T-cell (primary cell): ENCODE measurements at regions of chr6 and their contacts with region 1.

Region 1: DNA sequence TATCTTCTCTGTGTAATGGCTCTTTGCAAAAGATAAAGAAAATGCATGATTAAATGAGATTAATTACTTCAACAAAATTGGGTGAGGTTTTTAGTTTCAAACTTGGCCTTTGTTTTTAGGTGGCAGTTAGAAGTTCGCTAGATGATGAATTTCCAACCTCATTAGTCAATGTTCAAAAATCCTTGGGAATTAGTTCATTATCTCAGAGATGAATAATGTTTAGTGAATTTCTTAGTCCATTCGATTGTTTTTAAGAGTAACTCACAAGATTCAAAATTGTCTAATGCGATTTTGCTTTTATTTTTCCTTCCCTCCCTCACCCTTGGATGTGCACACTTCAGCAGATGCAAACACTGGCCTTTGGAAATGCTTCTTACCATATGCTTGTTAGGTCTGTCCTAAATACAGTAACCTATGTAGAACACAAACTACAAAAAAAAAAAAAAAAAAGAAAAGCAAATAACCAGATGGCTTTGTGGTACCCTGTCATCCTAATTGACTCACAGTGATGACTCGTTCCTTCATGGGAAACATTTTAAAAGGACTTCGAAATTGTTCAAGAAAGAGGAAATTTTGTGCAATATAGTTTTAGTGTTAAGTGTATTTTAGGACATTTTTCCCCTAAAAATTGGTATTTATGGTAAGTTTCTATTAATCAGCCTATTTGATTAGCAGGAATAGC is 66.7 kb downstream of the FAM229B start:
- DNase-seq: no peak
- ATAC-seq: no peak
- H3K4me3 ChIP-seq: no peak overlapping the region
- H3K4me3 Mint-ChIP-seq: no peak overlapping the region
- H3K27ac ChIP-seq: no peak overlapping the region
- H3K27ac Mint-ChIP-seq: no peak overlapping the region
- H3K4me1 ChIP-seq: no peaks in the 10 kb centered on the region
- H3K4me1 Mint-ChIP-seq: peaks cover 0 to 9% (median 0%) of the 10 kb centered on the region in 3 donors
- H3K27me3 ChIP-seq: no peaks in the 10 kb centered on the region
- H3K27me3 Mint-ChIP-seq: peaks cover 5 to 16% of the 10 kb centered on the region in 2 donors

Region 2: DNA sequence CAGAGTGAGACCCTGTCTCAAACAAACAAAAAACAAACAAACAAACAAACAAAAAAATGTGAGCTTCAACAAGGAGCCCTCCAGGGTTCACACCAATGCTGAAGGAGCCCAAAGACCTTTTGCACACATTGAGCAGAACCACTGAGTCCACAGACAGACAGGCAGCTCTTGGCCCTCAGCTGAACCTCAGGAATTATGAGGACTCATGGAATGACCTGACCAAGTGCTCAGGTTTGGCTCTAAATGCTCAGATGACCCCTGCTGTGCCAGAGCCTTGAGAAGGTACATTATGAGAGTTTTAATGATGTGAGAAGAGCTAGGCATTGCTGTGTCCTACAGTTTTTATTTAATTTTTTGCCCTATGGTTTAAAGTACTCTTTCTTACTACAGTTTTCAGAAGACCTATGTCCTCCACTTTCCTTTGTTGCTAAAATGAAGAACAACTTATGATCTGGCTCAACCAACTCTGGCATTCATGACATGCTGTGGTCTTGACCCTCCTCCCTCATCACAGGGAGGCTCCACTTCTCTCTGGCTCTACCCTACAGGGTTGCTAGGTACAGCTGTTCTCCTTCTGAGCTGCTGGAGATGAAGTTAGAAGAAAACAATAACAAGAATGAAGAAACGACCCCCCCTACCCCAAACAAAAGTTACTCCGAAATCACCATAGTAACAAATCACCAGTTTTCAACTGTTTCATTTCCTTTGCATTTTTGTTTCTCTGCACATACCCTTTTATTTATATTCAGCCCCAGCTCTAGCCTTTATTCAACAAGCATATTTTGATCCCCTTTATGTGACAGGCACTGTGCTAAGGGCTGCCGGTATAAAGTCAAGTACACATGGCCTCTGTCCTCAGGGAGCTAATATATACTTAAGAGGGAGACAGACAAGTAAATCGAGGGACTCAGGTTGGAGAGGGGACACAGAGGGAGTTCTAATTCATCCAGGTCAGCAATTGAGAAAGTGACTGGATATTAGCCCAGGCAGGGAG is 419.7 kb before region 1 on chr6:
- CTCF ChIA-PET with region 1: no interaction called
- POLR2A ChIA-PET with region 1: interaction called in 1 of 2 experiments, 11 read pairs
- DNase-seq: peak in 2 of 35 experiments; percentile 34 to 49
- ATAC-seq: peak in 1 of 4 experiments; percentile 68
- H3K4me3 ChIP-seq: no peak overlapping the region
- H3K4me3 Mint-ChIP-seq: peak overlapping the region in 1 of 3 donors; percentile 29
- H3K27ac ChIP-seq: peak overlapping the region; percentile 56
- H3K27ac Mint-ChIP-seq: peak overlapping the region; percentile 90 to 96
- H3K4me1 ChIP-seq: peaks cover 40 to 89% of the 10 kb centered on the region in 2 experiments
- H3K4me1 Mint-ChIP-seq: peaks cover 77 to 100% (median 92%) of the 10 kb centered on the region in 3 donors
- H3K27me3 ChIP-seq: no peaks in the 10 kb centered on the region
- H3K27me3 Mint-ChIP-seq: no peaks in the 10 kb centered on the region